Transverse colon (tissue), 4 donors: ENCODE measurements at regions of chr7 and their contacts with region 1.

Region 1: DNA sequence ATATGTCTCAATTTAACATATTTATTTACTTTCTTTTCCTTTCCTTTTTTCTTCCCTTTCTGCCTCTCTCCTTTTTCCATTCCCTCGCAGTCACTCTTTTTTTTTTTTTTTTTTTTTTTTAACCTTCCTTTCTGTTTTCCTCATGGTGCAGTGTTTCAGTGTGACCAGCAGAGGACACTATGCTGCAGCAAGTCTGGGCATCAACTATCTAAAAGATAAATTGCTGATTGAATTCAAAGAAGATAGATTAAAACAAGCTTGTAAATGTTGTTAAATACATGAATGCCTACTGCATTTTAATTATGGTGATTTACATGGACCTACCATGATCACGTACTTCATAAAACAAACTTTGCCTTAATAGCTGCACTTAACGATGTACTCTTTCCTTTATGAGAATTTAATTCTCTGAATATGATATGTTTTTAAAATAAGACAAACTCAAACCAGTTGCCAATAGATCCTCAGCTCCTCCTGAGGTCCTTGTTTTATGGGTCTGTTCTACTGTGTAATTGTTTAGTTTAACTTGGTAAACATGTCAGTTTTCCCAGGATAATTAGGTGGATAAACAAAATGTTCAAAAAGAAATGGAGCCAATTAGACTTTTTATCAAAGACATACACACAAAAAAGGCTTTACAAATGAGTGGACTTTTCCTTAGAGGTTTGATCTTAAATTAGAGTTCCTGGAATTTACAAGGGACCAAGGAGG is 101.0 kb upstream of the AGR3 start:
- DNase-seq: peak; percentile 14
- H3K4me3 ChIP-seq: no peak overlapping the region
- H3K27ac ChIP-seq: peak overlapping the region in 2 of 4 donors; percentile 12 to 13
- H3K4me1 ChIP-seq: peaks cover 5 to 35% (median 13%) of the 10 kb centered on the region in 4 donors
- H3K27me3 ChIP-seq: no peaks in the 10 kb centered on the region
- CTCF ChIP-seq: peak; percentile 88 to 95 (median 92)
- EP300 ChIP-seq: no peak
- POLR2A ChIP-seq: no peak

Region 2: DNA sequence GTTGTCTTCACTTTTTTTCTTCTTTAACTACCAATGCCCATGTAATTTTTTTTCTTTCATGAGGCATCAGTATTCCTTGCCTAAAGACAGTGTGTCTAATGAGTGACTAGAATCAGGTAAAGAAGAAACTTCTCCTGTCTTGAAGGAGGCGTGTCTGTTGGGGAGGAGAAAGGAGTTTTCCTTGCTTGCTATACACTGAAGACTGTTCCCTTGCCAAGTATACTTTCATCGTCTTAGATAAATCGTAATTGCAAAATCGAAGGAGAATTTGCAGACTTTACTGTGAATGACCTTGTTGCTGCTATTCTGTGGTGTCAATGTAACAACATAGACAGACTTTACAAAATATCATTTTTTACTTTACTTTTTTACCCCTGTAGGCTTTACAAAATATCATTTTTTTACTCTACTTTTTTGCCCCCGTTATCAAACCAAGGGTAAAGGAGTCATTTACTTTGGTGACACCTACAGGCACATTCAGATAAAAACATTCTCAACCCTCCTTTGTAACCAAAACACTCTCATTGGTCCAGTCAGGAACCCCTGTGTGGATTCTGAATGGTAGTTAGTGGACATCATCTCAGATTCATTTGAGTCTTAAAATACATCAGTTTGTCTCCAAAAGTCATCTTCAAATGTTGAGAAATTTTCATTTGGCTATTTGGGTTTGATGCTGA is 548.1 kb after region 1 on chr7:
- in situ Hi-C with region 1: loop called in 2 of 4 experiments (anchors 25 kb)
- intact Hi-C with region 1: no loop called
- DNase-seq: no peak
- H3K4me3 ChIP-seq: no peak overlapping the region
- H3K27ac ChIP-seq: no peak overlapping the region
- H3K4me1 ChIP-seq: peaks cover 0 to 14% (median 0%) of the 10 kb centered on the region in 4 donors
- H3K27me3 ChIP-seq: no peaks in the 10 kb centered on the region
- CTCF ChIP-seq: peak in 3 of 5 experiments; percentile 6 to 13 (median 8)
- EP300 ChIP-seq: no peak
- POLR2A ChIP-seq: no peak

Region 3: DNA sequence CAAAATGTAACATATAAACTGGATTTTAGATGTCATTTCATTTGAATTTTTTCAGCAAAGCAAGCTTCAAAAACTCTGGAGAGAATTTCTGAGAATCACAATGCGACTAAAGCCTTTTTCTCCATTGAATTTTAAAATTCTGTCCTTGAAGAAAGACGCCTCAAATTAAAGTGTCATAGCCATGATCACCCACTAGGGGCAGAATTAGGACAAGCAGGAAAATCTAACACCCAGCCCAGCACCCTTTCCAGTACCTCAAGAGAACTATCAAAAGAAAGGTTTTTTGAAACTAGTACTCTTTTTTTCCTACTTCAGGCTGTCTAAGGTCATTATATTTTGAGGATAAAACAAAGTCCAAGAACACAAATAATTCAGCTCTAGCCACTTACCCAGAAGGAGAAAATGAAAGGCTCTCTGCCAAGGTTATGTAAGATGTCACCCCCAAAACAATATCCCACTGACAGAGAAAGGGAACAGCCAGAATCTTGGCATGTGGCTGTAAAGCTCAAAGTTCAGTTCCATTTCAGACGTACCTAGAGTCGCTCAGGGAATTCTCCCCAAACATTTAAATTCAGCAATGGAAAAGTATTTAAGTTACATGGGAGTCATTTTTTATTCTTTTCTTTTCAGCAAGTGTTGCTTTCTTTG is 658.1 kb after region 1 on chr7:
- in situ Hi-C with region 1: loop called in 2 of 4 experiments (anchors 25 kb)
- intact Hi-C with region 1: no loop called
- DNase-seq: no peak
- H3K4me3 ChIP-seq: no peak overlapping the region
- H3K27ac ChIP-seq: no peak overlapping the region
- H3K4me1 ChIP-seq: no peaks in the 10 kb centered on the region
- H3K27me3 ChIP-seq: no peaks in the 10 kb centered on the region
- CTCF ChIP-seq: peak; percentile 55 to 68 (median 65)
- EP300 ChIP-seq: no peak
- POLR2A ChIP-seq: no peak